Heart right ventricle (tissue), 16 donors: ENCODE measurements at regions of chr12 and their contacts with region 1.

Region 1: GRCh38 chr12:83005534-83006197 is 319.0 kb downstream of the TMTC2 start:
- DNase-seq: no peak
- ATAC-seq: no peak
- H3K4me3 ChIP-seq: no peak overlapping the region
- H3K27ac ChIP-seq: no peak overlapping the region
- H3K4me1 ChIP-seq: peaks cover 0 to 4% (median 0%) of the 10 kb centered on the region in 9 donors
- H3K27me3 ChIP-seq: no peaks in the 10 kb centered on the region
- CTCF ChIP-seq: no peak

Region 2: DNA sequence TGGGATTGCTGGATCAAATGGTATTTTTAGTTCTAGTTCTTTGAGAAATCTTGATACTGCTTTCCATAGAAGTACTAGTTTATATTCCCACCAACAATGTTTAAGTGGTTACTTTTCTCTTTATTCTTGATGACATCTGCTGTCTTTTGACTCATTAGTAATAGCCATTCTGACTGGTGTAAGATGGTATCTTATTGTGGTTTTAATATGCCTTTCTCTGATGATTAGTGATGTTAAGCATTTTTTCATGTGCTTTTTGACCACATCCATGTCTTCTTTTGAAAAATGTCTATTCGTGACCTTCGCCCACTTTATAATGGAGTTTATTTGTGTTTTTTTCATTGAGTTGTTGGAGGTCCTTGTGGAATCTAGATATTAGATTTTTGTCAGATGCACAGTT is 1041.2 kb after region 1 on chr12:
- intact Hi-C with region 1: loop called in 1 of 10 experiments (anchors 5 kb)
- DNase-seq: no peak
- ATAC-seq: no peak
- H3K4me3 ChIP-seq: no peak overlapping the region
- H3K27ac ChIP-seq: no peak overlapping the region
- H3K4me1 ChIP-seq: no peaks in the 10 kb centered on the region
- H3K27me3 ChIP-seq: no peaks in the 10 kb centered on the region
- CTCF ChIP-seq: no peak